K562 (cell line): ENCODE measurements at regions of chr1 and their contacts with region 1.

Region 1: GRCh38 chr1:23809751-23810171 is 9.2 kb upstream of the GALE start:
- DNase-seq: peak; percentile 80 to 91 (median 85)
- ATAC-seq: peak; percentile 96
- H3K4me3 ChIP-seq: no peak overlapping the region
- H3K27ac ChIP-seq: no peak overlapping the region
- H3K4me1 ChIP-seq: peaks cover 5 to 18% of the 10 kb centered on the region in 2 experiments; a peak in 4 of 5 replicates
- H3K27me3 ChIP-seq: no peaks in the 10 kb centered on the region
- CTCF ChIP-seq: peak; percentile 96 to 98 (median 98)
- EP300 ChIP-seq: 0 out of 2 replicates have a peak, but pooled peaks have one; percentile 8
- POLR2A ChIP-seq: no peak
- RAD21 ChIP-seq: peak; percentile 80 to 94

Region 2: GRCh38 chr1:23790696-23791515 is 18.9 kb before region 1 on chr1 and contains the start of gene LYPLA2:
- CTCF ChIA-PET with region 1: no interaction called
- POLR2A ChIA-PET with region 1: interaction called, 14 read pairs
- in situ Hi-C with region 1: no loop called
- intact Hi-C with region 1: no loop called
- DNase-seq: peak; percentile 85 to 98 (median 90)
- ATAC-seq: peak; percentile 92
- H3K4me3 ChIP-seq: peak within 1 kb of the TSS; percentile 58
- H3K27ac ChIP-seq: peak within 1 kb of the TSS; percentile 90
- H3K4me1 ChIP-seq: peaks cover 31 to 49% of the 10 kb centered on the region in 2 experiments
- H3K27me3 ChIP-seq: no peaks in the 10 kb centered on the region
- CTCF ChIP-seq: no peak
- EP300 ChIP-seq: peak; percentile 23; the same call in 1 of the 2 replicates
- POLR2A ChIP-seq: peak; percentile 78
- RAD21 ChIP-seq: no peak
- polyA plus RNA-seq, gene LYPLA2: 3.9 to 9.9 TPM

Region 3: GRCh38 chr1:23854568-23854967 is 44.8 kb after region 1 on chr1:
- CTCF ChIA-PET with region 1: interaction called, 5 read pairs
- POLR2A ChIA-PET with region 1: no interaction called
- in situ Hi-C with region 1: no loop called
- intact Hi-C with region 1: loop called (anchors 1 kb)
- DNase-seq: peak in 3 of 4 experiments; percentile 27 to 53 (median 34)
- ATAC-seq: peak; percentile 88
- H3K4me3 ChIP-seq: no peak overlapping the region
- H3K27ac ChIP-seq: no peak overlapping the region
- H3K4me1 ChIP-seq: no peaks in the 10 kb centered on the region
- H3K27me3 ChIP-seq: no peaks in the 10 kb centered on the region
- CTCF ChIP-seq: peak; percentile 55 to 69 (median 63)
- EP300 ChIP-seq: no peak
- POLR2A ChIP-seq: no peak
- RAD21 ChIP-seq: peak; percentile 39 to 63

Region 4: GRCh38 chr1:23908493-23909341 is 99.0 kb after region 1 on chr1:
- CTCF ChIA-PET with region 1: no interaction called
- POLR2A ChIA-PET with region 1: no interaction called
- in situ Hi-C with region 1: loop called (anchors 5 kb)
- intact Hi-C with region 1: no loop called
- DNase-seq: peak; percentile 38 to 56 (median 49)
- ATAC-seq: peak; percentile 68
- H3K4me3 ChIP-seq: no peak overlapping the region
- H3K27ac ChIP-seq: no peak overlapping the region
- H3K4me1 ChIP-seq: peaks cover 24 to 34% of the 10 kb centered on the region in 2 experiments
- H3K27me3 ChIP-seq: no peaks in the 10 kb centered on the region
- CTCF ChIP-seq: no peak
- EP300 ChIP-seq: no peak
- POLR2A ChIP-seq: no peak
- RAD21 ChIP-seq: no peak